ENCODE measurements at regions of chr11 and their contacts with region 1.

Region 1: GRCh38 chr11:65988791-65989592 is 13.0 kb downstream of the EIF1AD start:
- DNase-seq: peak; percentile 84 to 96 (median 91)
- ATAC-seq: peak; percentile 98
- H3K4me3 ChIP-seq: no peak overlapping the region
- H3K4me3 Mint-ChIP-seq: no peak overlapping the region
- H3K27ac ChIP-seq: peak overlapping the region in 1 of 2 experiments; percentile 20
- H3K27ac Mint-ChIP-seq: peak overlapping the region; percentile 6
- H3K4me1 ChIP-seq: no peaks in the 10 kb centered on the region
- H3K4me1 Mint-ChIP-seq: peaks cover 5% of the 10 kb centered on the region
- H3K27me3 ChIP-seq: no peaks in the 10 kb centered on the region
- H3K27me3 Mint-ChIP-seq: no peaks in the 10 kb centered on the region
- CTCF ChIP-seq: peak; percentile 98

Region 2: GRCh38 chr11:65700391-65700790 is 288.6 kb before region 1 on chr11:
- CTCF ChIA-PET with region 1: interaction called, 10 read pairs
- POLR2A ChIA-PET with region 1: no interaction called
- intact Hi-C with region 1: no loop called
- DNase-seq: no peak
- ATAC-seq: no peak
- H3K4me3 ChIP-seq: no peak overlapping the region
- H3K4me3 Mint-ChIP-seq: no peak overlapping the region
- H3K27ac ChIP-seq: no peak overlapping the region
- H3K27ac Mint-ChIP-seq: no peak overlapping the region
- H3K4me1 ChIP-seq: no peaks in the 10 kb centered on the region
- H3K4me1 Mint-ChIP-seq: no peaks in the 10 kb centered on the region
- H3K27me3 ChIP-seq: no peaks in the 10 kb centered on the region
- H3K27me3 Mint-ChIP-seq: peaks cover 2% of the 10 kb centered on the region
- CTCF ChIP-seq: no peak

Region 3: DNA sequence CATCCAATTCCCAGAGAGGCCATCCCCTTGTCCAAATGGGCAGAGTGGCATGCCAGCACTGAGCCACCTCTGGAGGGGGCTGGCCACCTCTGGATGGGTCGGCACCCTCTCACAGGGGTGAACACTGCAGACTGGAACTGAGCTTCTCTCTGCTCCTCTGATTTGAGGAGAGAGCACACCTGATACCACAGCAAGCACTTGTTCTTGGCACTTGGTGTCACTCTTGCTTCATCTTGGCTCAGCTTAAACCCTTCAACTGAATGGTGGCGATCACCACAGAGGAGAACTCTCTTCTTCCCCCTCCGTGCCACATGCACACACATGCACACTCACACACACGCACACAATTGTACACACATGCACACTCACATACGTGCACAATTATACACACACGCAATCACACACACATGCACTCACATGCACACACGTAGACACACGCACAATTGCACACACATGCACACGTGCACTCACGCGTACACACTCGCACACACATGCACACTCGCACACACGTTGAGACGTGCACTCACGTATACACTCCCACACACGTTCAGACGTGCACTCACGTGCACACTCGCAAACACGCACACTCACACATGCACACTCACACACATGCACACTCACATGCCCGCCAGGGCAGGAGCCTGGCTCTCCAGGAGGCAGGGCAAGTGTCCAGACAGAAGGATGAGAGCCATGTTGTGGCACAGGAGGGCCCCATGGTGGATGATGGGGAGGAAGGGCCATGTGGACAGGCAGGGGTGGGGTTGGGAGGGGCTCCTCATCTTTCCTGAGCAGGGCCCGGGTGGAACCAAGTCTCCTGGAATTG is 178.7 kb before region 1 on chr11:
- CTCF ChIA-PET with region 1: interaction called, 5 read pairs
- POLR2A ChIA-PET with region 1: no interaction called
- intact Hi-C with region 1: loop called in 1 of 2 experiments (anchors 2 kb)
- DNase-seq: peak in 2 of 9 experiments; percentile 49 to 62
- ATAC-seq: peak; percentile 90
- H3K4me3 ChIP-seq: no peak overlapping the region
- H3K4me3 Mint-ChIP-seq: no peak overlapping the region
- H3K27ac ChIP-seq: no peak overlapping the region
- H3K27ac Mint-ChIP-seq: no peak overlapping the region
- H3K4me1 ChIP-seq: no peaks in the 10 kb centered on the region
- H3K4me1 Mint-ChIP-seq: no peaks in the 10 kb centered on the region
- H3K27me3 ChIP-seq: no peaks in the 10 kb centered on the region
- H3K27me3 Mint-ChIP-seq: peaks cover 2% of the 10 kb centered on the region
- CTCF ChIP-seq: no peak

Region 4: DNA sequence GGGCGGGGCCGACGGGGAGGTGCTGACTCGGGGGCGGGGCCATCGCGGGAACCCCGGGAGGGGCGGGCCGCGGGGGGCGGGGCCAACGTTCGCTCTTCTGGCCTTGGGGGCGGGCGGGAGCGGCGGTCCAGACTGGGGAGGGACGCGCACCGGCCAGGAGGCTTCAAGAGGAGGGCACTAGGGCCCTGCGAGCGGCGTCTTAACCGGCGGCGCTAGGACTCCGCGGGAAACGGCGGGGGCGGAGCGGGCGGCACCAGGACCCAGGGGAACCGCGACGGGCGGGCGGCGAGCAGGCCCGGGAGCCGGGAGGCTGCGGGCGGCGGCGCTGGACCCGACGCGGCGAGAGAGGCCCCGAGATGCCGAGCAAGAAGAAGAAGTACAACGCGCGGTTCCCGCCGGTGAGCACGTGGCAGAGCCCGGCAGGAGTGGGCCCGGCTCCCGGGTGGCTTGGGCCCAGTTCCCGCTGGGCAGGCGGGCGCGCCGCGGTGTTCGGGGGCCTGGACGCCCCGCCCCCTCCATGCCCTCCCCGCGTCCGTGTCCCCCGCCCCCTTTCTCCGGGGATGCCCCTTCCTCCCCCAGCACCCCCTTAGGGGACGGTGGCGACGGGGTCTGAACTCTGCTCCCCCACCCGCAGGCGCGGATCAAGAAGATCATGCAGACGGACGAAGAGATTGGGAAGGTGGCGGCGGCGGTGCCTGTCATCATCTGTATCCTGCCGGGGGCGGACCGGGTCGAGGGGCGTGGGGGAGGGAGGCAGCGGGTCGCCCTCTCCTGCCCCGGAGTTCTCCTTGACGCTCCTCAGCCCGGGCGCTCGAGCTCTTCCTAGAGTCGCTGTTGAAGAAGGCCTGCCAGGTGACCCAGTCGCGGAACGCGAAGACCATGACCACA is 69.6 kb before region 1 on chr11 and contains the start of gene DRAP1:
- CTCF ChIA-PET with region 1: no interaction called
- POLR2A ChIA-PET with region 1: interaction called, 3 read pairs
- intact Hi-C with region 1: loop called in 1 of 2 experiments (anchors 2 kb)
- DNase-seq: peak; percentile 98 to 100 (median 99)
- ATAC-seq: peak; percentile 89
- H3K4me3 ChIP-seq: peak within 1 kb of the TSS; percentile 94
- H3K4me3 Mint-ChIP-seq: peak within 1 kb of the TSS; percentile 91
- H3K27ac ChIP-seq: peak within 1 kb of the TSS; percentile 79 to 81
- H3K27ac Mint-ChIP-seq: peak within 1 kb of the TSS; percentile 93
- H3K4me1 ChIP-seq: peaks cover 41% of the 10 kb centered on the region
- H3K4me1 Mint-ChIP-seq: peaks cover 51% of the 10 kb centered on the region
- H3K27me3 ChIP-seq: no peaks in the 10 kb centered on the region
- H3K27me3 Mint-ChIP-seq: no peaks in the 10 kb centered on the region
- CTCF ChIP-seq: no peak
- total RNA-seq, gene DRAP1: 62.2 to 63.1 TPM

Region 5: DNA sequence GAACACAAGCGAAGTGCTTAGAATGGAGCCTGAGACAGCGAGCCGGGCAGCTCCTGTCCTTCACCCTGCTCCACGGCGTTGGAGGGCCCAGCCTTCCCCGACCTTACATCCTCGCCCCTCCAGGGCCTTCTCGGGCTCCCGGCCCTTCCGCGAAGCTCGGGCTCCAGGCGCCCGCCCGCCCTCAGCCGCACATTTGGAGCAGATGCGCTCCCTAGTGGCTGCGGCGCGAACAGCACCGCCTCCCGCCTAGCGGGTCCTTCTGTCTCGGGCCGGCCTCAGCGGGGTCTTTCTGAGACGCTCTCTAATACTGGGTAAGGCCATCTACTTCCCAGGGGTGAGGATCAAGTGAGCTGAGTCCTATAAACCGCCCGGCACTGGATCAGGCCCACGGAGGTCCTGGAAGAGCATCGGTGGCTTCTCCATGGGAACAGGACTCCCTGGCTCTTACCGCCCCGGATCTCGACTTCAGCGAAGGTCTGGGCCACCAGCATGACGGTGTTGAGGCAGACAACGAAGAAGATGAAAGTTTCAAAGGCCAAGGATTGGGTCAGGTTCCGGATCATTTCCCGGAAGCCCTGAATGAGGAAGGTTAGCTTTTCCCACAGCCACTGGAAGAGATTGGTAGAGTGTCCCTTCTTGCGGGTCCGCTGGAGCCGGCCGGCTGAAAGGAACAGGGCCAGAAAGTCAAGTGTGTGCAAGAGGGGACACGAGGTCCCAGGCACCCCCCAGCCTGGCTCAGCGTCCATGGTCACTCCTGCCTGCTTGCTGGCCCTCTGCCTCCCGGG is 33.6 kb after region 1 on chr11:
- CTCF ChIA-PET with region 1: interaction called, 8 read pairs
- POLR2A ChIA-PET with region 1: no interaction called
- intact Hi-C with region 1: loop called in 1 of 2 experiments (anchors 1 kb)
- DNase-seq: peak; percentile 63 to 86 (median 80)
- ATAC-seq: peak; percentile 99
- H3K4me3 ChIP-seq: peak overlapping the region in 1 of 2 experiments; percentile 4
- H3K4me3 Mint-ChIP-seq: peak overlapping the region; percentile 43
- H3K27ac ChIP-seq: no peak overlapping the region
- H3K27ac Mint-ChIP-seq: no peak overlapping the region
- H3K4me1 ChIP-seq: peaks cover 7% of the 10 kb centered on the region
- H3K4me1 Mint-ChIP-seq: peaks cover 5% of the 10 kb centered on the region
- H3K27me3 ChIP-seq: no peaks in the 10 kb centered on the region
- H3K27me3 Mint-ChIP-seq: peaks cover 3% of the 10 kb centered on the region
- CTCF ChIP-seq: peak; percentile 97

Measured in CD8-positive, alpha-beta T cell (primary cell).